Uterus (tissue), 4 donors: ENCODE measurements at regions of chr1 and their contacts with region 1.

Region 1: DNA sequence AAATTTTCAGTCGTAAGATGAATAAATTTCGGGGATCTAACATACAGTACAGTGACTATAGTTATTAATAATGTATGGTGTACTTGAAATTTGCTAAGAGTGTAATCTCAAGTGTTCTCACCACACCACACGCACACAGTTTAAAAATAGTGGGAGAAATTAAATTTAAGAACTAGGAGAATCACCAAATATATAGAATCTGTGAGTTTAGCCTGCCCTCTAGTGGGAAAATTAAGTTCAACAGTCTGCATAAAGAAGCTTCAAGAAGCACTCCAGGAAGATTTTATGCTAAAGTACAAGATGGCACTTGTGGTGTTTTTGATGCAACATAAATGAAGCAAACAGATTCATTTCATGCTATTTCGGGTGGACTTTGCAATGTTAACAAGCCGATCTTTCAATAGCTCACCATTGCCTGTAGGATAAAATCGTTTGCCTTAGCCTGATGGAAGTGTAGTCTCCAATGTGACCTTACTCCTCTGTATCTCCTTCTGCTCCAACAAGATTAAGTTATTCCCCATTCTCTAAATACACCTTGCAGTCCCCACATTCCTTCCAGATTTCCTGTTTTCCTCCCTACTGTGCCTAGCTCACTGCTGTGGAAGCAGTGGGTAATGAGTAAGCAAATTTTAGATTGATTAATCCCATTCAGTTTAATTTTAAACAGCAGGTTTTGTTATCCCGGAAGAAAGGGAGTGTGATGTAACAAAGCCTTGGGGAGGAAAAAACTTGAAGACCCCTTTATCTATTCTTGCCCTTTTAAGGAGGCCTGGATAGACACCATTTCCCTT is 8.7 kb upstream of the PIK3C2B start:
- DNase-seq: no peak
- H3K4me3 ChIP-seq: no peak overlapping the region
- H3K27ac ChIP-seq: no peak overlapping the region
- H3K4me1 ChIP-seq: no peaks in the 10 kb centered on the region
- H3K27me3 ChIP-seq: no peaks in the 10 kb centered on the region
- CTCF ChIP-seq: peak; percentile 68 to 90 (median 82)
- POLR2A ChIP-seq: no peak

Region 2: DNA sequence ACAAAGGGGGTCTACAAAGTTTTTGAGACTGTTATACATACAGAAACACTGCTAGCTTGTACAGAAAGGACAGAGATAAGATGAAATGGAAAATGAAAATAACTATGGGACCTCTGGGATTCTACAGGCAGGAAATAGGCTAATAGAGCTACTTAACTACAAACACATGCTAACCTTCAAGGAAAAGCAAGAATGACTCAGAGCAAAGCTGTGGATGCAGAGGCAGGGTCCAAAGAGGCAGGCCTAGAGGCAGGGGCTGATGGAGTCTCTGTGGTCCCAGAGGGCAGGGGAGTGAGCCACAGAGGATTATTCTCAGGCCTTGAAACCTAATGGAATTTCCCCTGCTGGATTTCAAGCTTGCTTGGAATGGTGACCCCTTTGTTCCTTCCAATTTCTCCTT is 270.8 kb before region 1 on chr1:
- intact Hi-C with region 1: no loop called
- DNase-seq: no peak
- H3K4me3 ChIP-seq: no peak overlapping the region
- H3K27ac ChIP-seq: no peak overlapping the region
- H3K4me1 ChIP-seq: no peaks in the 10 kb centered on the region
- H3K27me3 ChIP-seq: no peaks in the 10 kb centered on the region
- CTCF ChIP-seq: no peak
- POLR2A ChIP-seq: no peak

Region 3: GRCh38 chr1:204431310-204432165 is 71.8 kb before region 1 on chr1:
- intact Hi-C with region 1: loop called (anchors 5 kb)
- DNase-seq: peak; percentile 80 to 85
- H3K4me3 ChIP-seq: no peak overlapping the region
- H3K27ac ChIP-seq: peak overlapping the region; percentile 37 to 66
- H3K4me1 ChIP-seq: peaks cover 4 to 7% of the 10 kb centered on the region in 2 donors
- H3K27me3 ChIP-seq: no peaks in the 10 kb centered on the region
- CTCF ChIP-seq: peak; percentile 84 to 93 (median 88)
- POLR2A ChIP-seq: no peak

Region 4: DNA sequence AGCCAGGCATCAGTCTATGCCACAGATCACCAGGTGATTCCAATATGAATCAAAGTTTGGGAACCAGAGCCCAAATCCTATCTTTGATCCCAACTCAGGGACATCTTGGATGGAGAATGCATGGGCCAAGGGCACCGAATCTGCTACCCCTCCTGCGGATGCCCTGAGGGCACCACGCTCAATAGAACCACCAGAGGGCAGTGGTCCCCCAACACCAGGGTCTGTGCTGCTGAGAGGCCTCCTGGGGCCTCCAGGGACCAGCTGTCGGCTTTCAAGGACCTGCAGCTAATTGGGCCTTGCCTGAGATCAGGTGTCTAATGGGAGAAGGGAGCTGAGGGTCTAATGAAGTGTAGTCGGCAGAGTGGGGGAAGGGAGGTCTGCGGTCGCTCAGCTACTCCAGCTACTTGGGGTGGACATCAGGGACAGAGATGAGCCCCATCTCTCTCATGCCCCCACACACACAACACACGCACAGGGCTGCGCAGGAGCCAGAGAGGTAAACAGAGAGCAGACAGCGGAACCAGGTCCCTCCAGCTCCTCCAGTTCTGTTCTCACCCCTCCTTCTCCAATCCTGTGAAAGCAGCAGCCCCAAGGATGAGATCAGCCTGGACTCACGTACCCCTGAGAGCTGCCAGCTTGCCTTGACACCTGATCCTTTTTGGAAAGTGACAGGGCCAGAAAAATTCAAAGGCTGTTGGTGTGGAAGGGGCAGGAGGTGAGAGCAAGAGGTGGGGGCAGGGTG is 56.8 kb before region 1 on chr1:
- intact Hi-C with region 1: loop called (anchors 5 kb)
- DNase-seq: peak; percentile 60 to 64
- H3K4me3 ChIP-seq: no peak overlapping the region
- H3K27ac ChIP-seq: peak overlapping the region; percentile 10 to 21
- H3K4me1 ChIP-seq: no peaks in the 10 kb centered on the region
- H3K27me3 ChIP-seq: no peaks in the 10 kb centered on the region
- CTCF ChIP-seq: peak; percentile 63 to 78 (median 74)
- POLR2A ChIP-seq: no peak